MCF 10A (cell line): ENCODE measurements at regions of chr6 and their contacts with region 1.

Region 1: GRCh38 chr6:49556429-49556841 is 6.0 kb downstream of the C6orf141 start:
- DNase-seq: peak; percentile 95
- H3K4me3 Mint-ChIP-seq: peak overlapping the region; percentile 8
- H3K27ac Mint-ChIP-seq: peak overlapping the region; percentile 66
- H3K4me1 Mint-ChIP-seq: peaks cover 36% of the 10 kb centered on the region
- H3K27me3 Mint-ChIP-seq: no peaks in the 10 kb centered on the region
- CTCF ChIP-seq: no peak

Region 2: DNA sequence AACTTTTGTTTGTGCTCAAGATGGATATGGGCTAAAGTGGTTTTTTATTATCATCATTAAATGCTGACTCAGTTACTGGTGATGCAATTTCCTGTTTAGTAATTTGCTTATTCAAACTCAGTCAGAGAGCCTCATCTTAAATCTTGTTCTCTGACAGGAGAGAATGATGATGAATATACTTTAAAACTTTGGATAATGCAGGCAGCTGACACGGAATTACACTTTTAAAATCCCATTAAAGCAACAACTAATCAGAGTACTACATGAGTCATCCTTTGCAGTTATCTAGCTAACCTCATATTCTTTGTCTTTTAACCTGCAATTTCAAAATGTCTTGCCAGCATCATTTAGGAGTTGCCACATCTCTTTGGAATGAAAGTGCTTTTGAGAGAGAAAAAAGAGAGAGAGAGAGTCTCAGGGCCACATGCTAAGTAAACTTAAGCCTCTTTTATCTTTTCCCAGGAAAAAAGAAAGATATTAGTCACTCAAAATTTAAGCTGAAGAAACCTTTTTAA is 15.2 kb before region 1 on chr6:
- CTCF ChIA-PET with region 1: interaction called, 41 read pairs
- POLR2A ChIA-PET with region 1: interaction called, 216 read pairs
- intact Hi-C with region 1: loop called (anchors 1 kb)
- DNase-seq: peak; percentile 88
- H3K4me3 Mint-ChIP-seq: peak overlapping the region; percentile 30
- H3K27ac Mint-ChIP-seq: peak overlapping the region; percentile 89
- H3K4me1 Mint-ChIP-seq: peaks cover 8% of the 10 kb centered on the region
- H3K27me3 Mint-ChIP-seq: no peaks in the 10 kb centered on the region
- CTCF ChIP-seq: no peak